HEK293 (cell line): ENCODE measurements at regions of chr3 and their contacts with region 1.

Region 1: DNA sequence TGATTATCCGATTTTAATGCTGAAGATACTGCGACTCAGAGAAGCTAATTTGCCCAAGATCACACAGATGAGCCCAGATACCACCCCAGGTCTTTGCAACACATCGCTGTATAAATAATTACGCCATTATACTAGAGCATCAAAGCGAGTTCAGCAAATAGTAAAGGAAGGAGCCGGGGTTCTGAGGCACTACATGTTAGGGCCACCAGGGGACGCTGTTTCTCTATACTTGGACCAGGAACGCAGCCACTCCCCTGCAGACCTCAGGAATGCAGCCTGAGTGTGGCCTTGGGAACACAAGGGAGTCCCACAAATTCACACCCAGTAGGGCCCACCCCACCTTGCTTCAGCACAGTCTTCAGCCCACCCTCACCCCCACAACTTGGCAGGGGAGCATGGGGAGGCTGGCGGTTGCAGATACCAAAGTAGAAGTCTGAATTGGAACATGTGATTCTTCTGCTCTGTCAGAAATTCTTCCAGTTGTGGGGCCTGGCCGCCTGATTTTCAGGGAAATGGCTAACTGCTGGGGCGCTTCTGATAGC is 57.8 kb upstream of the RYK start:
- H3K4me3 ChIP-seq: no peak overlapping the region
- H3K27ac ChIP-seq: no peak overlapping the region
- H3K4me1 ChIP-seq: no peaks in the 10 kb centered on the region
- CTCF ChIP-seq: peak; percentile 82

Region 2: GRCh38 chr3:133851266-133851906 is 457.0 kb before region 1 on chr3:
- CTCF ChIA-PET with region 1: no interaction called
- POLR2A ChIA-PET with region 1: no interaction called
- H3K4me3 ChIP-seq: no peak overlapping the region
- H3K27ac ChIP-seq: no peak overlapping the region
- H3K4me1 ChIP-seq: no peaks in the 10 kb centered on the region
- CTCF ChIP-seq: no peak

Region 3: GRCh38 chr3:134364061-134364935 is 55.9 kb after region 1 on chr3:
- CTCF ChIA-PET with region 1: interaction called, 16 read pairs
- POLR2A ChIA-PET with region 1: interaction called, 7 read pairs
- H3K4me3 ChIP-seq: peak overlapping the region; percentile 7
- H3K27ac ChIP-seq: no peak overlapping the region; the same call in 1 of the 2 replicates
- H3K4me1 ChIP-seq: peaks cover 7% of the 10 kb centered on the region; the same call in 1 of the 2 replicates
- CTCF ChIP-seq: no peak

Region 4: GRCh38 chr3:134381827-134382442 is 73.5 kb after region 1 on chr3:
- CTCF ChIA-PET with region 1: interaction called, 29 read pairs
- POLR2A ChIA-PET with region 1: interaction called, 3 read pairs
- H3K4me3 ChIP-seq: no peak overlapping the region
- H3K27ac ChIP-seq: no peak overlapping the region
- H3K4me1 ChIP-seq: no peaks in the 10 kb centered on the region
- CTCF ChIP-seq: no peak

Region 5: DNA sequence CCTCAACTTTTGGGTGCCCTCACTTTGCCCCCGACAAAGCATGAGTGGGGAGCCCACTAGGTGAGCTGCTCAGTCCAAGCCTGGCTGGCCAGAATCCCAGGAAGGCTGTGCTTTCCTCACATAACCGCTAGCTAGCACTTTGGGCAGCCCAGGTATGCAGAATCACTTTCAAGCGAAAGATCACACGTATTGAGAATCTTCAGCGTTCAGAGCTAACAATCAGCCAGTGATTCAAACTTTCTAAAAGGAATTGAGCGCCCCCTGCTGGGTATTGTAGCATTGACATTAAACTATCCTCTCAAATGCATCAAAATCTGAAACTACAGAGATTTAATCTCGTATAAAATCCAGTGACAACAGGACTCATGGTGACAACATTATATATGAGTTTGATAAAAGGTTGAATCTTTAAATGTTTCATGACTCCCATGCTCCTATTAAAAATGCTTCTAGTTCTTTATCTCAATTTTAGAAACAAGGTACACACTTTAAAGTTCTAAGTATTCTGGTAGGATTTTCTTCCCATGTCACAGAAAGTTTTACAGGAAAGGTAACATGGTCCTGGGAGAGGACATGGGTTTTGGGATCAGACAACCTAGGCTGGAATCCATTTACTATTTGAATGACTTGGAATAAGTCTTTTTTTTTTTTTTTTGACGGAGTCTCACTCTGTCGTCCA is 165.6 kb after region 1 on chr3:
- CTCF ChIA-PET with region 1: interaction called, 124 read pairs
- POLR2A ChIA-PET with region 1: interaction called, 5 read pairs
- H3K4me3 ChIP-seq: no peak overlapping the region
- H3K27ac ChIP-seq: no peak overlapping the region
- H3K4me1 ChIP-seq: no peaks in the 10 kb centered on the region
- CTCF ChIP-seq: peak; percentile 40; the same call in 1 of the 2 replicates